ENCODE measurements at regions of chr17 and their contacts with region 1.

Region 1: DNA sequence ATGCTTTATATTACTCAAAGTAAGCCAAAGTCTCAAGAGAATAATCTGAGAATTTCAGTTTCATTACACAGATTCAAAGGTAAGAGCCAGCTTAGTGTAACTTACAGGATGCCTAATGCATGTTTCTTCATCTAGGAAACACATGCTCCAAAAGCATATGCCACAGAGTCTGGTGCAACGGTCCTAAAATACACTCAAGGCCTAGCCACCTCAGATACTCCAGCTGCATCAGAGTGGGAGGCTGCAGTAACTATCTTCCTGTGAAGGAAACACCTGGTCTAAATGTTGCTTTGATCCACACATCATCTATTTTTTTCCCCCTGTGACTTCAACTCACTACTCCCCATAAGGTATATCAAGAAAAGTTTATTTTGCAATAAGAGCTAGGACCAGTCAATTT is 51.6 kb upstream of the CORO6 start:
- DNase-seq: no peak
- ATAC-seq: no peak
- H3K4me3 ChIP-seq: no peak overlapping the region
- H3K27ac ChIP-seq: no peak overlapping the region; the same call in 1 of the 2 replicates
- H3K4me1 ChIP-seq: peaks cover 6% of the 10 kb centered on the region
- H3K27me3 ChIP-seq: no peaks in the 10 kb centered on the region
- CTCF ChIP-seq: no peak
- EP300 ChIP-seq: no peak
- POLR2A ChIP-seq: no peak
- RAD21 ChIP-seq: no peak

Region 2: GRCh38 chr17:29622337-29623282 is 51.7 kb before region 1 on chr17 and contains the start of gene CORO6:
- CTCF ChIA-PET with region 1: interaction called, 5 read pairs
- POLR2A ChIA-PET with region 1: no interaction called
- RAD21 ChIA-PET with region 1: no interaction called
- SMC1A ChIA-PET with region 1: interaction called, 3 read pairs
- in situ Hi-C with region 1: no loop called
- intact Hi-C with region 1: loop called (anchors 5 kb)
- DNase-seq: no peak
- ATAC-seq: peak; percentile 71
- H3K4me3 ChIP-seq: peak within 1 kb of the TSS; percentile 78
- H3K27ac ChIP-seq: no peak within 1 kb of the TSS
- H3K4me1 ChIP-seq: peaks cover 10% of the 10 kb centered on the region
- H3K27me3 ChIP-seq: no peaks in the 10 kb centered on the region; a peak in 1 of 4 replicates
- CTCF ChIP-seq: no peak
- EP300 ChIP-seq: no peak
- POLR2A ChIP-seq: no peak
- RAD21 ChIP-seq: no peak
- polyA plus RNA-seq, gene CORO6: 0.26 TPM in 1 of 2 experiments, not detected in the other

Region 3: GRCh38 chr17:29802246-29802645 is 128.0 kb after region 1 on chr17:
- CTCF ChIA-PET with region 1: no interaction called
- POLR2A ChIA-PET with region 1: no interaction called
- RAD21 ChIA-PET with region 1: no interaction called
- SMC1A ChIA-PET with region 1: no interaction called
- in situ Hi-C with region 1: no loop called
- intact Hi-C with region 1: no loop called
- DNase-seq: no peak
- ATAC-seq: no peak
- H3K4me3 ChIP-seq: no peak overlapping the region
- H3K27ac ChIP-seq: no peak overlapping the region
- H3K4me1 ChIP-seq: no peaks in the 10 kb centered on the region
- H3K27me3 ChIP-seq: no peaks in the 10 kb centered on the region
- CTCF ChIP-seq: no peak
- EP300 ChIP-seq: no peak
- POLR2A ChIP-seq: no peak
- RAD21 ChIP-seq: no peak